Pancreas (tissue), 10 donors: ENCODE measurements at regions of chr11 and their contacts with region 1.

Region 1: GRCh38 chr11:112588252-112588694 is 327.6 kb upstream of the PLET1 start:
- DNase-seq: peak in 5 of 6 donors; percentile 21 to 58 (median 51)
- ATAC-seq: peak; percentile 71 to 96 (median 94)
- H3K4me3 ChIP-seq: no peak overlapping the region
- H3K27ac ChIP-seq: no peak overlapping the region
- H3K4me1 ChIP-seq: no peaks in the 10 kb centered on the region
- H3K27me3 ChIP-seq: no peaks in the 10 kb centered on the region
- CTCF ChIP-seq: peak; percentile 40 to 75 (median 62)

Region 2: DNA sequence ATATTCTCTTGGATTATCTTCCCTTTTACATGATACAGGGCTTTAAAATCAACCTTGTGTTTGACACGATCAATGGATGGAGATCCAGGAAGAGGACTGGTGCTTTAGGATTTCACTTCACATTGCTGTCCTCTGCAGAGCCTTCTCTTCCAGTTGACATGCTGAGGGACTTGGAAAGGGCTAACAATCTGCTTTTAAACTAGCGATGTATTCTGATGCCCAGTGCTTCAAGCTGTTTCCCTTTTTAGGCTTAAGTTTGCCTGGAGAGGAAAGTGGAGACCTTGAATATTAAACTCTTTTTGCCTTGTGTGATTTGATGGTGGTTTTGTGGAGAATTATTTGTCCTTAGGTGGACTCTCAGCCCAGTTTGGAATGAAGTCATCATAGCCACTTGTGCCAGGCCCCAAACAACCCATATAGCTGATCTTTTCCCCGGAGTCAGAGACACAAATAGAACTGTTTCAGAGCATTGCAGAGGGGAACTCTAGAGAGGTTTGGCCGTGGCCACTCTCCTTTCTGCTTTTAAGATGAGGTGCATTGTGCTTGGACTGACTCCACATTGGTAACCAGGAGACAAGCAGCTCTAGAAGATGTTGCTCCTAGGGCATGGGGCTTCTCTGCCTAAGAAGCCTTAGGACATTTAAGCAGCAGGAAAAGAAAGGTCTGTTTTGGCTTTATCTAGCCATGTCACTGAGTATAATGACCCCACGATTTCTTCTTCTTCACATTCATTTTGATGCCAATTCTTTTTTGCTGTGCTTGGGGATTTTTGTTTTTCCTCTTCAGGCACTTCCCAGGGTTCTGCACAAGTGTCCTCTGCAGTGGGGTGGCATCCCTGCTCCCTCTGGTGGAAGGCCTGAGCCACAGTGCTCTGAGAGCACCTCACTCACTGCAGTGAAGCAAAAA is 525.8 kb after region 1 on chr11:
- intact Hi-C with region 1: loop called in 1 of 3 experiments (anchors 10 kb)
- DNase-seq: peak; percentile 28 to 62 (median 52)
- ATAC-seq: peak; percentile 77 to 98 (median 98)
- H3K4me3 ChIP-seq: no peak overlapping the region
- H3K27ac ChIP-seq: no peak overlapping the region
- H3K4me1 ChIP-seq: no peaks in the 10 kb centered on the region
- H3K27me3 ChIP-seq: no peaks in the 10 kb centered on the region
- CTCF ChIP-seq: peak; percentile 10 to 59 (median 47)

Region 3: GRCh38 chr11:113289431-113290187 is 701.3 kb after region 1 on chr11:
- intact Hi-C with region 1: loop called in 2 of 3 experiments (anchors 10 kb)
- DNase-seq: peak; percentile 30 to 84 (median 65)
- ATAC-seq: peak; percentile 67 to 98 (median 94)
- H3K4me3 ChIP-seq: no peak overlapping the region
- H3K27ac ChIP-seq: no peak overlapping the region
- H3K4me1 ChIP-seq: no peaks in the 10 kb centered on the region
- H3K27me3 ChIP-seq: peaks cover 0 to 6% (median 0%) of the 10 kb centered on the region in 4 donors
- CTCF ChIP-seq: peak; percentile 71 to 90 (median 89)